CD14-positive monocyte (primary cell): ENCODE measurements at regions of chr12 and their contacts with region 1.

Region 1: GRCh38 chr12:4320853-4321701 is at the start of gene TIGAR:
- DNase-seq: peak; percentile 93 to 94 (median 93)
- H3K4me3 ChIP-seq: peak within 1 kb of the TSS; percentile 75 to 96 (median 95)
- H3K4me3 Mint-ChIP-seq: peak within 1 kb of the TSS; percentile 95 to 97
- H3K27ac ChIP-seq: peak within 1 kb of the TSS; percentile 89 to 96
- H3K27ac Mint-ChIP-seq: peak within 1 kb of the TSS; percentile 92 to 98 (median 95)
- H3K4me1 ChIP-seq: peaks cover 33 to 37% of the 10 kb centered on the region in 2 donors
- H3K4me1 Mint-ChIP-seq: peaks cover 34% of the 10 kb centered on the region
- H3K27me3 ChIP-seq: no peaks in the 10 kb centered on the region
- H3K27me3 Mint-ChIP-seq: peaks cover 5 to 11% (median 5%) of the 10 kb centered on the region in 3 donors
- CTCF ChIP-seq: no peak
- polyA plus RNA-seq, gene TIGAR: 5.5 to 16.0 (median 11.0) TPM

Region 2: GRCh38 chr12:3299929-3300832 is 1020.9 kb before region 1 on chr12:
- intact Hi-C with region 1: loop called in 1 of 2 experiments (anchors 10 kb)
- DNase-seq: peak; percentile 67 to 88 (median 69)
- H3K4me3 ChIP-seq: peak overlapping the region in 1 of 3 experiments; percentile 50
- H3K4me3 Mint-ChIP-seq: peak overlapping the region; percentile 62 to 80
- H3K27ac ChIP-seq: no peak overlapping the region
- H3K27ac Mint-ChIP-seq: peak overlapping the region in 6 of 7 donors; percentile 54 to 88 (median 80)
- H3K4me1 ChIP-seq: peaks cover 7 to 10% of the 10 kb centered on the region in 2 donors
- H3K4me1 Mint-ChIP-seq: peaks cover 11% of the 10 kb centered on the region
- H3K27me3 ChIP-seq: peaks cover 0 to 2% of the 10 kb centered on the region in 2 donors
- H3K27me3 Mint-ChIP-seq: peaks cover 10 to 23% (median 17%) of the 10 kb centered on the region in 3 donors
- CTCF ChIP-seq: peak; percentile 97

Region 3: DNA sequence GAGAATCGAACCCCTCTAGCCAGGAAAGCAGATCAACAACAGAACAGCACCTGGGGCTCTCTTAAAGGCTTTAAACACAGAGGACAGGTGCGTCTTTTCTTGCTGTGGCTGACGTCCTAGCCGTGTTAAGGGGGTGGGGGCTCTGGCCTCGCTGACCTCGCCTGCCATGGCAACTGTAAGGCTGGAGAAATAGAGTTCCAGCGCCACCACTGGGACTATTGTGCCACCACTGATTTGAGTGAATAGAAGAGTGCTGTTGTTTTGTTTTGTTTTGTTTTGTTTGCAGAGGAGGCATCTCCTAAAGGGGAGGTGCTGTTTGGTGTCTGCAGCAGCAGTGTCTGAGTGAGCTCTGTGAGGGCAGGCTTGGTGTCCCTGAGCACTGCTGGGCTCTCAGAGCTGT is 864.3 kb before region 1 on chr12:
- intact Hi-C with region 1: no loop called
- DNase-seq: no peak
- H3K4me3 ChIP-seq: no peak overlapping the region
- H3K4me3 Mint-ChIP-seq: no peak overlapping the region
- H3K27ac ChIP-seq: no peak overlapping the region
- H3K27ac Mint-ChIP-seq: no peak overlapping the region
- H3K4me1 ChIP-seq: no peaks in the 10 kb centered on the region
- H3K4me1 Mint-ChIP-seq: no peaks in the 10 kb centered on the region
- H3K27me3 ChIP-seq: peaks cover 0 to 10% of the 10 kb centered on the region in 2 donors
- H3K27me3 Mint-ChIP-seq: peaks cover 22 to 34% (median 28%) of the 10 kb centered on the region in 3 donors
- CTCF ChIP-seq: no peak

Region 4: GRCh38 chr12:4287325-4288211 is 33.5 kb before region 1 on chr12:
- intact Hi-C with region 1: loop called in 1 of 2 experiments (anchors 5 kb)
- DNase-seq: peak; percentile 67 to 85 (median 74)
- H3K4me3 ChIP-seq: peak overlapping the region in 1 of 3 experiments; percentile 79
- H3K4me3 Mint-ChIP-seq: peak overlapping the region in 1 of 2 donors; percentile 86
- H3K27ac ChIP-seq: peak overlapping the region in 1 of 2 donors; percentile 96
- H3K27ac Mint-ChIP-seq: peak overlapping the region in 6 of 7 donors; percentile 96 to 99 (median 98)
- H3K4me1 ChIP-seq: peaks cover 51 to 55% of the 10 kb centered on the region in 2 donors
- H3K4me1 Mint-ChIP-seq: peaks cover 63% of the 10 kb centered on the region
- H3K27me3 ChIP-seq: no peaks in the 10 kb centered on the region
- H3K27me3 Mint-ChIP-seq: peaks cover 0 to 4% (median 2%) of the 10 kb centered on the region in 3 donors
- CTCF ChIP-seq: no peak

Region 5: GRCh38 chr12:4538207-4539160 is 217.4 kb after region 1 on chr12 and contains the start of gene RAD51AP1:
- intact Hi-C with region 1: loop called in 1 of 2 experiments (anchors 10 kb)
- DNase-seq: peak; percentile 92 to 97 (median 97)
- H3K4me3 ChIP-seq: peak within 1 kb of the TSS; percentile 68 to 98 (median 81)
- H3K4me3 Mint-ChIP-seq: peak within 1 kb of the TSS; percentile 89 to 94
- H3K27ac ChIP-seq: peak within 1 kb of the TSS; percentile 43 to 98
- H3K27ac Mint-ChIP-seq: peak within 1 kb of the TSS; percentile 94 to 99 (median 98)
- H3K4me1 ChIP-seq: peaks cover 10 to 24% of the 10 kb centered on the region in 2 donors
- H3K4me1 Mint-ChIP-seq: peaks cover 23% of the 10 kb centered on the region
- H3K27me3 ChIP-seq: no peaks in the 10 kb centered on the region
- H3K27me3 Mint-ChIP-seq: no peaks in the 10 kb centered on the region
- CTCF ChIP-seq: no peak
- polyA plus RNA-seq, gene RAD51AP1: 1.0 to 1.4 (median 1.3) TPM

Region 6: DNA sequence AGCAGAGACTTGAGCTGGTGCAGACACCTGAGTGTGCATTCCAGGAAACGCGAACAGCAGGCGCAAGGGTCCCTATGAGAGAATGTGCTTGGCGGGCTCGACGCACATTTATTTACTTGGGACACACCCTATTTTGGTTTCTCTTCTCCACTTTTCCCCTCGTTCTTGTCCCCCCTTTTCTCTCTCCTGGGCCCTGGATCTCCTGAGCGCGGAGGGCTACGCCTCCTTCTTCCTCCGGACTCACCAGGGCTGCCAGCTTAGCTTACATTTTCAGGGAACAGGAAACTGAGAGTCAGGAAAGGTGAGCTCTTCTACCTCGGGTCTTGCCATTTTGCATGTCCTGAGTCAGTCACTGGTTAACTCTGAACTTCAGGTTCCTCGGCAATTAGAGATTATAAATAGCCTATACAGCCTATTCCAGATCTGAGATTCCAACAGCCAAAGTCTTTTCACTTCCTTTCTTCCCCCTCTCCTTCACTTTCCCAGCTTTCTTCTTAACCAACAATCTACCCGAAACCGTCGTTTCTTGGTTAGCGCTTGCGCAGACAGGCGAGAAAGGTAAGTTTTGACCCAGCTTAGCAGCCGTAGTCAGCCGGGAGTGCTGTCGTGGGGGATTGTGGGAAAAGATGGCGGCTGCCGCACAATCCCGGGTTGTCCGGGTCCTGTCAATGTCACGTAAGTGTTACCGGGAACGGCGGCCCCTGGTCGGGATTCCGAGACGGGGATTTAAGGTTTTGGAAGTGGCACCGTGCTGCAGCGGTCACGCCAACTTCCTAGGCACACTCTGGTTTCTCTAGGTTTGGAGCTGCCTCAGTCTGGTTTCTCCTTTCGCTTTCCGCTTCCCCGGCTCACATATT is 327.7 kb after region 1 on chr12 and contains the starts of genes AKAP3 and NDUFA9:
- intact Hi-C with region 1: loop called in 1 of 2 experiments (anchors 10 kb)
- DNase-seq: peak; percentile 59 to 69 (median 66)
- H3K4me3 ChIP-seq: peak within 1 kb of the TSS; percentile 80 to 100 (median 90)
- H3K4me3 Mint-ChIP-seq: peak within 1 kb of the TSS; percentile 94
- H3K27ac ChIP-seq: peak within 1 kb of the TSS; percentile 61 to 95
- H3K27ac Mint-ChIP-seq: peak within 1 kb of the TSS; percentile 85 to 97 (median 94)
- H3K4me1 ChIP-seq: peaks cover 17 to 20% of the 10 kb centered on the region in 2 donors
- H3K4me1 Mint-ChIP-seq: peaks cover 32% of the 10 kb centered on the region
- H3K27me3 ChIP-seq: no peaks in the 10 kb centered on the region
- H3K27me3 Mint-ChIP-seq: peaks cover 6 to 15% (median 10%) of the 10 kb centered on the region in 3 donors
- CTCF ChIP-seq: no peak
- polyA plus RNA-seq, gene AKAP3: 0.08 TPM in 1 of 3 donors, not detected in the others
- polyA plus RNA-seq, gene NDUFA9: 31.4 to 200 (median 136) TPM